Activated CD4-positive, alpha-beta memory T cell treated with anti-CD3 and anti-CD28 coated beads for 36 hours (primary cell): ENCODE measurements at regions of chr19 and their contacts with region 1.

Region 1: GRCh38 chr19:46860125-46860845 is 512 bp upstream of the ARHGAP35 start:
- DNase-seq: peak; percentile 98
- H3K4me3 Mint-ChIP-seq: peak overlapping the region; percentile 85
- H3K27ac Mint-ChIP-seq: peak overlapping the region; percentile 91
- H3K4me1 Mint-ChIP-seq: peaks cover 17% of the 10 kb centered on the region
- H3K27me3 Mint-ChIP-seq: no peaks in the 10 kb centered on the region

Region 2: DNA sequence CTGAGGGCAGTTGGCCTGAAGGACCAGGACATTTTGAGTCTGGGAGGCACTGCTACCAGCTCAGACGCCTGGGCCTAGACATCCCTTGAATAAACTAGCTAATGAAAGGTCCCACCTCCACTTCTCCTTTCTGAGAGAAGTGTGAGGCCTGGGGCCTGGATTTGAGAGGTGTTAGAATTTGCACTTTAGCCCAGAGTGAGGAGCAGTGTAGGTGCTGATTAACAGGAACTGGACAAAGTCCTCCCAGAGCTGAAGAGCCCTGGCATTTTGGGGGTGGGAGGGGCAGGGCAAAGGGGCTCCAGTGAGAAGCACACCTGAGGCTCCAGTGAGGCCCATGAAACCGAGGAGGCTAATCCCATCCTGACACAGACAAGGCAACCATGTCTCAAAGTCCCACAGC is 56.7 kb before region 1 on chr19:
- CTCF ChIA-PET with region 1: no interaction called
- POLR2A ChIA-PET with region 1: no interaction called
- intact Hi-C with region 1: no loop called
- DNase-seq: no peak
- H3K4me3 Mint-ChIP-seq: no peak overlapping the region
- H3K27ac Mint-ChIP-seq: no peak overlapping the region
- H3K4me1 Mint-ChIP-seq: no peaks in the 10 kb centered on the region
- H3K27me3 Mint-ChIP-seq: no peaks in the 10 kb centered on the region

Region 3: GRCh38 chr19:46913852-46914430 is 53.7 kb after region 1 on chr19:
- CTCF ChIA-PET with region 1: no interaction called
- POLR2A ChIA-PET with region 1: no interaction called
- intact Hi-C with region 1: loop called (anchors 10 kb)
- DNase-seq: no peak
- H3K4me3 Mint-ChIP-seq: no peak overlapping the region
- H3K27ac Mint-ChIP-seq: no peak overlapping the region
- H3K4me1 Mint-ChIP-seq: peaks cover 61% of the 10 kb centered on the region
- H3K27me3 Mint-ChIP-seq: no peaks in the 10 kb centered on the region

Region 4: DNA sequence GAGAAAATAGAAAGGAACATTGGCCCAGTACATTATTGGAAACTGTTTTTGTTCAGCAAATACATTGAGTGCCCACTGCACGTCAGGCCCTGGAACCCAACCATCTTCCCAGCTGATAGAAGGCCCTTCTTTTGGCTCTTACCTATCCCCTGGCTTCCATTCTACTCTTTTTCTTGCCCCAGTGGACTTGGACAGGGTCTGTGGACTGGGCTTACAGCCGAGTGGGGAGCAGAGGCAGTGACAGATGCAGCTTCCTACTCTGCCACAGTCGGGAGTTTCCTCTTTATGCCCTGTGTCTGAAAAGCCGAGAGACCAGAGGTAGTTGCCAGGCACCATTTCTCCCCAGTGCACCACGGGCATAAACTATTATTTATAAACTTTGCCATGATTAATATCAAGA is 70.9 kb after region 1 on chr19:
- CTCF ChIA-PET with region 1: no interaction called
- POLR2A ChIA-PET with region 1: no interaction called
- intact Hi-C with region 1: no loop called
- DNase-seq: no peak
- H3K4me3 Mint-ChIP-seq: no peak overlapping the region
- H3K27ac Mint-ChIP-seq: no peak overlapping the region
- H3K4me1 Mint-ChIP-seq: peaks cover 66% of the 10 kb centered on the region
- H3K27me3 Mint-ChIP-seq: no peaks in the 10 kb centered on the region

Region 5: DNA sequence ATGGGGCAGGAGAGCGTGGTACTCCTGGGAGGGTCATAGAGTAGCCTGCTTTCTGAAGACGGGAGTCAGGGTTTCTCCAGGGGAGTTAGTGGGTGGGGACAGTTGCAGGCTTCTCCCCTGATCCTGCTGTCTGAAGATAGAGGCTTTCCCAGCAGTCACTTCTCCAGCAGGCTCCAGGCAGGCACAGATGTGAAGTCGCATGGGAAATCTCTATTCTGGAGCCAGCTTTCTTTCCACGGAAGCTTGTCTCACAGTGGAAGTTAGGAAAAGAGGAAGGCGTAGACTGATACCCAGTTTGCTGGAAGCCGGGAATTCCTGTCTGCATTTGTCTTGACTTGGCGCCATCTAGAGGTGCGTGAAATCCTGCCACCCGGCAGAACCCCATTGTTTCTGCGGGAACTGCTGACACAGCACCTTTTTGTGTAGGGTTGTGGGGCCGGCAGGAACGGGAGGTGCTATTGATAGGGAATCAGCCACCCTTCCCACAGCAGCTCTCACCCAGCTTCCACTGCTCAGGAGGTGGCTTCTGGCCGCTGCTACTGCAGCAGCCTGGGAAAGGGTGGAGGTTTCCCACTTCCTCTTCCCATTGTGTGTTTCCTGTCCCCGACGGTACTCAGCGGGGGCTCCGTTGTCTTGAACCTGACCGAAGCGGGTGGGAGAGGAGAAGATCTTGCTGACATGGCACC is 130.8 kb after region 1 on chr19:
- CTCF ChIA-PET with region 1: interaction called, 36 read pairs
- POLR2A ChIA-PET with region 1: no interaction called
- intact Hi-C with region 1: loop called (anchors 1 kb)
- DNase-seq: peak; percentile 76
- H3K4me3 Mint-ChIP-seq: no peak overlapping the region
- H3K27ac Mint-ChIP-seq: peak overlapping the region; percentile 34
- H3K4me1 Mint-ChIP-seq: peaks cover 10% of the 10 kb centered on the region
- H3K27me3 Mint-ChIP-seq: no peaks in the 10 kb centered on the region